ENCODE measurements at regions of chr16 and their contacts with region 1.

Region 1: DNA sequence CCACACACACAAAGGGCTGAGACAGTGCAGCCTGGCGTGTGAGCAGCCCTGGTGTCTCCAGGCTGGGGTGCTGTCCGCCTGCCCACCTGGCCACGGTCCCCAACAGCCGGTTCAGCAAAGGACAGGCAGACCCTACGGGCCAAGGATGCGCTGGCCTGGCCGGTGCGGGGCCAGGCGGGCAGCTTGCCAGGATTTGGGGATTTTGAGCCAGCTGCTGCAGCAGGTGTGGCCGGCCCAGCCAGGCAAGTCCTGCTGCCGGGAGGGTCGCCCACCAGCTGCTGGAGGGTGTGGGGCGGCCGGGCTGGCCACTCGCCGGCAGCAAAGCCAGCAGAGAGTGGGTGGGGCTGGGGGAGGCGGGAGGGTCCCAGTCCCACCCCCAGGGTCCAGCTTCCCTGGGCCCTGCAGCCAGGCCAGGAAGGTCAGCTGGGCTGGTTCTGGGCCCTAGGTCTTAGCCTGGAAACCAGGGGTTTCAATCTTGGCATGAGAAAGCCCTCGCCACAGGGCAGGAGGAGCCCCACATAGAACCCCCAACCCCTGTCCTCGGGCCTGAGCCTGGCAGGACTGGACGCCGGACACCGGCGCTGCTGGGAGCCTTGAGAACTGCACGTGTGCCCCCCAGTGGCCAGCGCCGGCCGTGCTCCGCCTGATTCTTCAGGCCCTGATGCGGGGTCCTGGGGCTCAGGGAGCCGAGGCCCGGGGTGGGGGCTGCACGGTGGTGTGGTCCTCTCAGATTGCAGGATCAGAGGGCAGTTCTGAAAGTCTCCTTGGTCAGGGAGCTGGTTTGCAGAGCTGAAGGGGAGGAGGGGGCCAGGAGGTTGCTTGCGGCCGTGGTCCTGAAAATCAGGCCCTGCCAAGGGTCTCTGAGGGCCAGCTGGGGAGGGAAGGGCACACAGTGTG is 17.6 kb upstream of the SSTR5 start:
- DNase-seq: peak; percentile 49
- H3K4me3 Mint-ChIP-seq: no peak overlapping the region
- H3K27ac Mint-ChIP-seq: no peak overlapping the region
- H3K4me1 Mint-ChIP-seq: no peaks in the 10 kb centered on the region
- H3K27me3 Mint-ChIP-seq: no peaks in the 10 kb centered on the region

Region 2: GRCh38 chr16:714558-715476 is 340.1 kb before region 1 on chr16 and contains the start of gene METRN:
- CTCF ChIA-PET with region 1: interaction called, 8 read pairs
- intact Hi-C with region 1: loop called (anchors 5 kb)
- DNase-seq: peak; percentile 87
- H3K4me3 Mint-ChIP-seq: peak within 1 kb of the TSS; percentile 53
- H3K27ac Mint-ChIP-seq: no peak within 1 kb of the TSS
- H3K4me1 Mint-ChIP-seq: peaks cover 10% of the 10 kb centered on the region
- H3K27me3 Mint-ChIP-seq: peaks cover 22% of the 10 kb centered on the region
- total RNA-seq, gene METRN: 8.2 to 11.0 TPM

Region 3: DNA sequence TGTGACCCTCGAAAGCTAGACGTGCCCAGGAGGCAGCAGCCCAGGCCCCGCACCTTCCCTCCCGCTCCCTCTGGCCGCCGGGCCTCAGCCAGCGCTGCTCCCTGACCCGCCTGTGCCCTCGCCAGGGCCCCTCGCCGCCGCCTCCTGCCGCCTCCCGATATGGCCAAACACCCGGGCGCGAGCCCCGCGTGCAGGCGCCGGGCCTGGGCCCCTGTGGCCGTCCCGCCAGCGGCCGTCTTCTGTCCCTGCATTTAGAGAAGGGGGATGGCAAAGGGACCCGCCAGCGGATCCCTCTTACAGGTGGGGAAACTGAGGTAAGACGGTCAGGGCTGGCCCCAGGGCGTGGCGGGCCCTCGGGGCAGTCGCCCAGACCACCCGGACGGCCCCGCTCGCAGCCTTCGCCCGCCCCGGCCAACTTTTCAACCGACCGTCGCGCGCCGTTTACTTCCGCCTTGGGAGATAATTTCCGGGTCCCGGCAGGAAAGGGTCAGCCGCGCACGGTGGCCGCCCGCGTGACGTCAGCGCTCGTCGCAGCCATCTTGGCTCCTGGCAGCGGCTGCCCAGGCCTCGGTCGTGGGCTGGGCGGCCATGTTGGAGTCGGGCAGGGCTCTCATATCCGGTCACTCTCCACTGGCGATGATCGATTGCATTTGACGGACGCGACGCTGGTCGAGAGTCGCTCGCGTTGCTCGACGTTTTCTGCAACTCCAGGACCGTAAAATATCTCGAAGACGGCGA is 247.4 kb before region 1 on chr16:
- CTCF ChIA-PET with region 1: interaction called, 4 read pairs
- intact Hi-C with region 1: loop called (anchors 2 kb)
- DNase-seq: peak; percentile 91
- H3K4me3 Mint-ChIP-seq: peak overlapping the region; percentile 98
- H3K27ac Mint-ChIP-seq: peak overlapping the region; percentile 88
- H3K4me1 Mint-ChIP-seq: peaks cover 11% of the 10 kb centered on the region
- H3K27me3 Mint-ChIP-seq: no peaks in the 10 kb centered on the region

Region 4: DNA sequence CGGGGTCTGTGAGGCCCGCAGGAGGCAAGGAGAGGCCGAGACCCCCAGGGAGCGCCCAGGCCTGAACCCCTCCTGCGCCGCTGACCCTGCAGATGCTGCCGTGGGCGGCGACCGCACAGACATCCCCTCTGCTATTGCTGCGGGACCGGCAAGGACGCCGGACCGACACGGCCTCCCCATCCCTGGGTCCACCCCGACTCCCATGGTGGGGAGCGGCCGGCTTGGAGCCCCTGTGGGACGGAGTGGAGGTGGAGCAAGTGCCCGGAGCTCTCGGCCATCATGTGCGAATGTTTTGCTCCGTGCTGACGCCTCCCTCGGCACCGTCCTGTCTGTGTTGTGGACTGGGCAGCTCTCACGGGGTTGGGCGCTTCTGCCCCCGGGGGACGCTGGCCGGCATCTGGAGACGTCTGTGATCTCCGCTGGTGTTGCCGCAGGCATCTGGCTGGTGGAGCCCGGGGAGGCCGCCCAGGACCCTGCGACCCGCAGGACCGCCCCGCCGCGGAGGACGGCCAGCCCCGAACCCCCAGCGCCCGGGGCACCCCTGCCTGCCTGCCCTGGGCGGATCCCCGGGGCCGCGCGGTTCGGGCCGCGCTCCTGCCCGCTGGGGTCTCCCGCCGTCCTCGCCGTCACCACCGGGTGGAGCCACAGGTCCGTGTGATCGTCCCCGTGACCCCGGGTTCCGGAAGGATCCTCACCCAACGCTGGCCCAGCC is 241.5 kb before region 1 on chr16:
- CTCF ChIA-PET with region 1: interaction called, 3 read pairs
- intact Hi-C with region 1: loop called (anchors 1 kb)
- DNase-seq: peak; percentile 61
- H3K4me3 Mint-ChIP-seq: no peak overlapping the region
- H3K27ac Mint-ChIP-seq: no peak overlapping the region
- H3K4me1 Mint-ChIP-seq: peaks cover 8% of the 10 kb centered on the region
- H3K27me3 Mint-ChIP-seq: peaks cover 13% of the 10 kb centered on the region

Region 5: GRCh38 chr16:997440-998051 is 57.4 kb before region 1 on chr16:
- CTCF ChIA-PET with region 1: interaction called, 3 read pairs
- intact Hi-C with region 1: loop called (anchors 1 kb)
- DNase-seq: peak; percentile 87
- H3K4me3 Mint-ChIP-seq: peak overlapping the region; percentile 47
- H3K27ac Mint-ChIP-seq: no peak overlapping the region
- H3K4me1 Mint-ChIP-seq: peaks cover 42% of the 10 kb centered on the region
- H3K27me3 Mint-ChIP-seq: no peaks in the 10 kb centered on the region

Region 6: GRCh38 chr16:1105888-1106620 is 51.1 kb after region 1 on chr16:
- CTCF ChIA-PET with region 1: interaction called, 3 read pairs
- intact Hi-C with region 1: loop called (anchors 2 kb)
- DNase-seq: peak; percentile 57
- H3K4me3 Mint-ChIP-seq: no peak overlapping the region
- H3K27ac Mint-ChIP-seq: no peak overlapping the region
- H3K4me1 Mint-ChIP-seq: no peaks in the 10 kb centered on the region
- H3K27me3 Mint-ChIP-seq: peaks cover 9% of the 10 kb centered on the region

Region 7: DNA sequence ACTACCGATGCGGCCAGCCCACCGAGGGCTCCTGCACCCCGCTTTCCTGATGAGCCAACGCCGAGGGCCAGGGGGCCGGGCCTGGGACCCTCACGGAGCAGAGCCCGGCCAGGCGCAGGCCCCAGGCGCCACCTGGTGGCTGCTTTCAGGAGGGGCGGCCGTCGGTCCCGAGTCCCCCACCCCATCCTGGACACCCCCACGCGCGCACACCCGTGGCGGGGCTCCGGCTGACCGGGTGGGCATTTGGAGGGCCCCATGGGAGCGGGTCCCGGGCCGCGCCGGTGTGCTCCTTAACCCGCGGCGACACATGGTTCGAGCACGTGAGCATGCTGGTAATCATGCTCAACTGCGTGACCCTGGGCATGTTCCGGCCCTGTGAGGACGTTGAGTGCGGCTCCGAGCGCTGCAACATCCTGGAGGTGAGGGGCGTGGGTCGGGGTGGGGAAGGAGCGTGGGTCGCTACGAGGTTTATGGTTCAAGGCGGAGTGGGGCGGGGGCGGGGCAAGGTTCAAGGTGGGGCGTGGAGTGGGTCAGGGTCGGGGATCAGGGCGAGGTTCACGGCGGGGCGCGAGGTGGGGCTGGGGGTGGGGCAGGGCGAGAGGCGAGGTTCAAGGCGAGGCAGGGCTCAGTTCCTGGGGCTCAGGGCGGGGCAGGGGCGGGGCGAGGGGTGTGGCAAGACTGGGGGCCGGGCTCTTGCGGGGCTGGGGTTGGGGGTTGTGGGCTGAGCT is 139.9 kb after region 1 on chr16:
- CTCF ChIA-PET with region 1: no interaction called
- intact Hi-C with region 1: loop called (anchors 2 kb)
- DNase-seq: peak; percentile 15
- H3K4me3 Mint-ChIP-seq: no peak overlapping the region
- H3K27ac Mint-ChIP-seq: no peak overlapping the region
- H3K4me1 Mint-ChIP-seq: no peaks in the 10 kb centered on the region
- H3K27me3 Mint-ChIP-seq: no peaks in the 10 kb centered on the region

Region 8: DNA sequence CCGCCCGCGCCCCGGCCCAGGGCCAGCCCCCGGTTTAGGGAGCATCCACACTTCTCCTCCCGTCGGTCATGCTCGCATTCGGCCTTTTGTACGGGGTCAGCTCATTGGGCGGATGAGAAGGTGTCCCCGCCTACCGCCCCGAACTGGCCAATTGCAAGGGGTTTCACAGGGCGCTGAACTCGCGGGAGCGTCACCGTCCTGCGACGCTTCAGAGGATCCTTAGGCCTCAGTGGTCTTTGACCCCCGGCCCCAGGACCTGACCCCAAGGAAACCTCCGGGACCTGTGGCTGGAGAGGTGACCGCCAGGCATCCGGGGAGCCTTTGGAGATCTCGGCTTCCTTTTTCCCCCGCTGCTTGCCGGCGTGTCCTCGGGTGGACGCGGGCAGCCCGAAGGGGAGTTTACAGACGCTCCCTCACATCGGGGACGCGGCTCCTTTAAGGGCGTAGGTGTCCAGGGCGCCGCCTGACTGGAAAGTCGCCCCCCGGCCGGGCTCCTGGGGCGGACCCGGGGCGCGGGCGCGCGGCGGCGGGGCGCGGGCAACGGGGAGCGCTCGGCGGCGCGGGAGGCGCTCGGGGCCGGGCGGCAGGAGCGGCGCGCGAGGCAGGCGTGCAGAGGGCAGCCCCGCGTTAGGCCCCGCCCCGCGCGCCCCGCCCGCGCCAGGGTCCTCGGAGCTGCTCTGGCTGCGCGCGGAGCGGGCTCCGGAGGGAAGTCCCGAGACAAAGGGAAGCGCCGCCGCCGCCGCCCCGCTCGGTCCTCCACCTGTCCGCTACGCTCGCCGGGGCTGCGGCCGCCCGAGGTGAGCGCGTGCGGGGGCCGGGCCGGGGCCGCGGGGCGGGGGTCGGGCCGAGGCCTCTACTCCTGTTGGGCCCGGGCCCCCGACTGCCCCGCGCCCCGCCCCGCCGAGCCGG is 254.3 kb after region 1 on chr16 and contains the start of gene UBE2I:
- CTCF ChIA-PET with region 1: no interaction called
- intact Hi-C with region 1: no loop called
- DNase-seq: peak; percentile 98
- H3K4me3 Mint-ChIP-seq: peak within 1 kb of the TSS; percentile 94
- H3K27ac Mint-ChIP-seq: peak within 1 kb of the TSS; percentile 99
- H3K4me1 Mint-ChIP-seq: peaks cover 41% of the 10 kb centered on the region
- H3K27me3 Mint-ChIP-seq: no peaks in the 10 kb centered on the region
- total RNA-seq, gene UBE2I: 273 to 297 TPM